Cardiac septum (tissue), 1 donor: ENCODE measurements at regions of chr10 and their contacts with region 1.

Region 1: GRCh38 chr10:117375360-117376178 is at the start of gene PDZD8:
- DNase-seq: peak; percentile 98
- total RNA-seq, gene PDZD8: 27.9 TPM

Region 2: DNA sequence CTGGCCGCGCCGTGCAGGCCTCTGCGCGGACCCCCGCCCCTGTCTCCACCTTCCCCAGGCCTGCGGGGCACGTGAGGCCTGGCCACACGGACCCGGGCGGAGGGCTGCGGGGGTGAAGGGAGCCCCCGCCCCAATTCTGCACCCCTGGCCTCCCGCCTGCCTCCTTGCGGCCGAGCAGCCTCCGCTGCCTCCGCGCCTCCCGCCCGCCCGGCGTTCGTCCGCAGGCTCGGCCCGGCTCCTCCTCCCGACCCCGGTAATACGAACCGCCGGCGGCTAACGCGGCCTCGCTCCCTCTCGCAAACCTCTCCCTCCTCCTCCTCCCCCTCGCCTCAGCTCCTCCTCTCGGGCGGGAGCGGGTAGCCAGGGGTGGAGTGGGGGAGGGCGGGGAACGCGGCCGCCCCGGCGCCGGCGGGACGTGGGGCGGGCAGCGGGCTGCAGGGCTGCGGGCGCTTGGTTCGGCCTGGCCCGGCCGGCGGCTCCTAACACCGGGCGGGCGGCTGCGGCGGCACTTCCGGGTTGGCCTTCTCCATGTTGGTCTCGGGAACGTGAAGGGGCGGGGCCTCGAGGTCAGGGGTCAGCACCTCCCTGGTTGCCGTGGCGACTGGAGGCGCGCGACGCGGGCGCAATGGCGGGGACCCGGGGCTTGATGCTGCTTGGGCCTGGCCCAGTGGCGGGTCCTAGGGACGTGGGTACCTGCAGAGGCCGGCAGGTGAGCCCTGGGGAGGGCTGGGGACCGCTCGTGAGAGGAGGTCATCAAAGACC is 671.0 kb after region 1 on chr10 and contains the start of gene RAB11FIP2:
- intact Hi-C with region 1: loop called (anchors 10 kb)
- DNase-seq: peak; percentile 99
- total RNA-seq, gene RAB11FIP2: 12.7 TPM